ENCODE measurements at regions of chr19 and their contacts with region 1.

Region 1: GRCh38 chr19:7868676-7869452 is 5.3 kb downstream of the PRR36 start:
- DNase-seq: peak; percentile 74
- H3K4me3 ChIP-seq: peak overlapping the region; percentile 32 to 57 (median 55)
- H3K27ac ChIP-seq: no peak overlapping the region
- H3K4me1 ChIP-seq: peaks cover 32% of the 10 kb centered on the region
- H3K27me3 ChIP-seq: peaks cover 9% of the 10 kb centered on the region
- CTCF ChIP-seq: peak; percentile 40 to 61

Region 2: DNA sequence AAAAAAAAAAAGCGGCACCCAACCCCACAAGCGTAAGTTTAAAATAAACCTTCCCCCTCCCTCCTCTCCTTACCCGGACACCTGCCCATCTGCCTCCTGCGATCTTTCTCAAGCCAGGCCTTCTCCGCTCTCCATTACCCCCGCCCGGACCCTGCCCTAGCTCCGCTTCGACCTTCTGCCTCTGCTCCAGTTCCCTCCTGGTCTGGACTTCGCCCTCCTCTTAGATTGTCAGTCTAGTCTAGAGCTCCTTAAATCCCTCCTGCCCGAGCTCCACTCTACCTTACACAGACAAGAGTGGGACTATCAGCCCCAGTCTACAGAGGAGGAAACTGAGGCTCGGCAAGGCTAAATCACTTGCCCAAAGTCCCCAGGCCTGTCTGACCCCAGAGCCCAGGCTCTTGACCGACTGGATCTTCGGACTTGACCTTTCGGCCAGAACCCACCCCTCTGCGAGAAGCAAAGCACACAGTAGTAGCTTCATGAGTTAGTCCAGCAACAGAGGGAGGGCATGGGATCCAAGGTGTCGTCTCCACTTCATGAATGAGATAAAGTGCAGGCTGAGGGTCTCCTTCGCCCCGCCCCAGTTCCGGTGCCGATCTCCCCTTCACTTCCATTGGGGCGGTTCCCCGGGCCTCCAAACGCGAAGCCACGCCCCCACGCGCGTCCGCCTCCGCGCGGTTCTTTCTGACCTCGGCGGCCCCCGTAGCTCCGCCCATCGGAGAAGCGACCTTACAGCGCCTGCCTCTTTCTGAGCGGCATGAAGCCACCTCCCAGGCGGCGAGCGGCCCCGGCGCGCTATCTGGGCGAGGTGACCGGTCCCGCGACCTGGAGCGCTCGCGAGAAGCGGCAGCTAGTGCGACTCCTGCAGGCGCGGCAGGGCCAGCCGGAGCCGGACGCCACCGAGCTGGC is 51.0 kb after region 1 on chr19 and contains the start of gene SNAPC2:
- CTCF ChIA-PET with region 1: interaction called, 4 read pairs
- dilution Hi-C with region 1: no loop called
- in situ Hi-C with region 1: no loop called
- intact Hi-C with region 1: loop called (anchors 1 kb)
- DNase-seq: peak; percentile 90
- H3K4me3 ChIP-seq: peak within 1 kb of the TSS; percentile 76 to 86 (median 79)
- H3K27ac ChIP-seq: peak within 1 kb of the TSS; percentile 52
- H3K4me1 ChIP-seq: peaks cover 32% of the 10 kb centered on the region
- H3K27me3 ChIP-seq: peaks cover 14% of the 10 kb centered on the region
- CTCF ChIP-seq: peak in 1 of 2 donors; percentile 3
- total RNA-seq, gene SNAPC2: 11.2 to 27.2 TPM